ENCODE measurements at regions of chr11 and their contacts with region 1.

Region 1: GRCh38 chr11:126194121-126194543 is 17.3 kb downstream of the RPUSD4 start:
- DNase-seq: peak in 18 of 35 experiments; percentile 6 to 60 (median 23)
- ATAC-seq: peak in 1 of 4 experiments; percentile 42
- H3K4me3 ChIP-seq: no peak overlapping the region
- H3K4me3 Mint-ChIP-seq: no peak overlapping the region
- H3K27ac ChIP-seq: no peak overlapping the region
- H3K27ac Mint-ChIP-seq: no peak overlapping the region
- H3K4me1 ChIP-seq: no peaks in the 10 kb centered on the region
- H3K4me1 Mint-ChIP-seq: no peaks in the 10 kb centered on the region
- H3K27me3 ChIP-seq: no peaks in the 10 kb centered on the region
- H3K27me3 Mint-ChIP-seq: no peaks in the 10 kb centered on the region

Region 2: GRCh38 chr11:125020342-125020741 is 1173.8 kb before region 1 on chr11:
- CTCF ChIA-PET with region 1: no interaction called
- POLR2A ChIA-PET with region 1: no interaction called
- DNase-seq: no peak
- ATAC-seq: no peak
- H3K4me3 ChIP-seq: no peak overlapping the region
- H3K4me3 Mint-ChIP-seq: no peak overlapping the region
- H3K27ac ChIP-seq: no peak overlapping the region
- H3K27ac Mint-ChIP-seq: no peak overlapping the region
- H3K4me1 ChIP-seq: peaks cover 0 to 9% of the 10 kb centered on the region in 2 experiments
- H3K4me1 Mint-ChIP-seq: peaks cover 0 to 1% (median 0%) of the 10 kb centered on the region in 3 donors
- H3K27me3 ChIP-seq: no peaks in the 10 kb centered on the region
- H3K27me3 Mint-ChIP-seq: no peaks in the 10 kb centered on the region

Region 3: DNA sequence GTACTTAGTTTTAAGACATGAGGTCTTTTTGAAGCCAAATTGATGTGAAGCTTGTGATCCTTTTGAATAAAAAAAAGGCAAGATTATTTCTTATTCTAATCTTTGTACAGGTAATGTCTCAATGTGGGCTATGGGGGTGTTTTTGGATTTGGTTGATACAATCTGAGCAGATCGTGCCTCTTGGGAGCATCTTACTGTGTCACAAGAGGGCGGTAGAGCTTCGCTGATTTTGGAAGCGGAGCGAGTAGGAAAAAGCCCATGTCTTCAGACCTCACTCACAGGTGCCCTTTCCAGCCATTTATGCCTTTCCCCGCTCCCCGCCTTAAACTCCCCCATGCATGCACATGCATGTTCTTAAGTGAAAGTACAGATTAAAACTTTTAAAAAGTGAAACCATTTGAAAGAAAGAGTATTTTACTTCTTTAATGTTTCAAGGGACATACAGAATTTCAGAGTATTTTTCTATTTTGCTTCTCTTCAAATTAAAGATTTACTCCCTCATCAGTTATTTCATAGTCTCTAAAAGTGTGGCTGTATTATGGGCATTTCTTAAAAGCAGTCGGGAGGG is 271.0 kb before region 1 on chr11:
- CTCF ChIA-PET with region 1: interaction called, 7 to 12 read pairs
- POLR2A ChIA-PET with region 1: no interaction called
- DNase-seq: peak in 32 of 35 experiments; percentile 8 to 78 (median 40)
- ATAC-seq: peak; percentile 54 to 72 (median 66)
- H3K4me3 ChIP-seq: no peak overlapping the region
- H3K4me3 Mint-ChIP-seq: no peak overlapping the region
- H3K27ac ChIP-seq: no peak overlapping the region
- H3K27ac Mint-ChIP-seq: no peak overlapping the region
- H3K4me1 ChIP-seq: no peaks in the 10 kb centered on the region
- H3K4me1 Mint-ChIP-seq: peaks cover 0 to 2% (median 0%) of the 10 kb centered on the region in 3 donors
- H3K27me3 ChIP-seq: peaks cover 0 to 16% of the 10 kb centered on the region in 2 experiments
- H3K27me3 Mint-ChIP-seq: peaks cover 17 to 20% of the 10 kb centered on the region in 2 donors

Region 4: GRCh38 chr11:126257144-126257543 is 63.0 kb after region 1 on chr11:
- CTCF ChIA-PET with region 1: no interaction called
- POLR2A ChIA-PET with region 1: no interaction called
- DNase-seq: no peak
- ATAC-seq: no peak
- H3K4me3 ChIP-seq: no peak overlapping the region
- H3K4me3 Mint-ChIP-seq: no peak overlapping the region
- H3K27ac ChIP-seq: no peak overlapping the region
- H3K27ac Mint-ChIP-seq: peak overlapping the region in 1 of 2 donors; percentile 11
- H3K4me1 ChIP-seq: no peaks in the 10 kb centered on the region
- H3K4me1 Mint-ChIP-seq: no peaks in the 10 kb centered on the region
- H3K27me3 ChIP-seq: no peaks in the 10 kb centered on the region
- H3K27me3 Mint-ChIP-seq: no peaks in the 10 kb centered on the region